ENCODE measurements at regions of chr14 and their contacts with region 1.

Region 1: GRCh38 chr14:70188659-70189455 is at the start of gene SLC8A3:
- DNase-seq: no peak
- H3K4me3 ChIP-seq: no peak within 1 kb of the TSS
- H3K27ac ChIP-seq: no peak within 1 kb of the TSS
- H3K4me1 ChIP-seq: no peaks in the 10 kb centered on the region
- H3K27me3 ChIP-seq: peaks cover 19% of the 10 kb centered on the region
- CTCF ChIP-seq: no peak
- total RNA-seq, gene SLC8A3: not detected in 2 replicates

Region 2: DNA sequence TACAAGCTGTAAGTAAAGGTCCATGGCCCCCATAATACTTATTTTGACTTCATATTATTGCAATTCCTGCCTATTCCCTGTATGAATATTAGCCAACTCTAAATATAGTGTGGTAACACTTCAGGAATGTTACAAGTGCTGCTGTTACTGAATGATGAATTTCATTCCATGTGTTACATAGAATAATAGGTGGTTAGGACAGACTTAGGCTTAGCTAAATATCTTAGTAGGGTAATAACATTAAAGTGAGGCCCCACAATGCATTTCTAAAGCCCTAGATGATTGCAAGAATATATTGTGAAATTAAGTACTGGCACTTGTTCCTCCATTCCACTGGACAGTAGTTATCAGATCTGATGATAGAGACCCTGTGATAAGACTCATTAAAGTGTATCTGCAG is 901.1 kb after region 1 on chr14:
- CTCF ChIA-PET with region 1: no interaction called
- POLR2A ChIA-PET with region 1: interaction called, 20 read pairs
- intact Hi-C with region 1: no loop called
- DNase-seq: no peak
- H3K4me3 ChIP-seq: no peak overlapping the region
- H3K27ac ChIP-seq: no peak overlapping the region
- H3K4me1 ChIP-seq: no peaks in the 10 kb centered on the region
- H3K27me3 ChIP-seq: no peaks in the 10 kb centered on the region
- CTCF ChIP-seq: no peak

Measured in PC-9 (cell line).